ENCODE measurements at regions of chr3 and their contacts with region 1.

Region 1: DNA sequence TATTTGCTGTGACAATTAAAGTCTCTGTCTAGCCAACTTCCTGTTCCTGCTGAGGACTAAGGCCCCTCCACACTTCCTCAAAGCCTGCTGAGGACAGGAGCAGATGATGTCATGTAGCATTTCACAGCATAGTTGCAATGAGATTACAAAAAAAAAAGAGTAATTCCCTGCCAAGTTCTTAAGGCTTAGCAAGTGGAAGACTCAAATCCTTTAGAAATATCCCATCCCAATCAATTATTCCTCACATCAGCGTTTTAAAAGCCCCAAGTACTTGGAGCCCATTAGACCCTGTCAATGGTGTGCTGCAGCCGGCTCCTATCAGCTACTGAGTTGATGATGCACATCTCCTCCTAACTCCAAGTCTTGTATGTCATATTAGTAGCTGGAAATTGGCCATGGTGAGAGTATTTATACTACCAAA is 51.7 kb downstream of the TRANK1 start:
- DNase-seq: peak in 22 of 35 experiments; percentile 24 to 77 (median 39)
- ATAC-seq: peak; percentile 87 to 97 (median 90)
- H3K4me3 ChIP-seq: no peak overlapping the region
- H3K4me3 Mint-ChIP-seq: peak overlapping the region in 1 of 3 donors; percentile 26
- H3K27ac ChIP-seq: peak overlapping the region; percentile 59
- H3K27ac Mint-ChIP-seq: peak overlapping the region; percentile 92 to 93
- H3K4me1 ChIP-seq: peaks cover 17 to 32% of the 10 kb centered on the region in 2 experiments
- H3K4me1 Mint-ChIP-seq: peaks cover 64 to 72% (median 68%) of the 10 kb centered on the region in 3 donors
- H3K27me3 ChIP-seq: no peaks in the 10 kb centered on the region
- H3K27me3 Mint-ChIP-seq: no peaks in the 10 kb centered on the region

Region 2: DNA sequence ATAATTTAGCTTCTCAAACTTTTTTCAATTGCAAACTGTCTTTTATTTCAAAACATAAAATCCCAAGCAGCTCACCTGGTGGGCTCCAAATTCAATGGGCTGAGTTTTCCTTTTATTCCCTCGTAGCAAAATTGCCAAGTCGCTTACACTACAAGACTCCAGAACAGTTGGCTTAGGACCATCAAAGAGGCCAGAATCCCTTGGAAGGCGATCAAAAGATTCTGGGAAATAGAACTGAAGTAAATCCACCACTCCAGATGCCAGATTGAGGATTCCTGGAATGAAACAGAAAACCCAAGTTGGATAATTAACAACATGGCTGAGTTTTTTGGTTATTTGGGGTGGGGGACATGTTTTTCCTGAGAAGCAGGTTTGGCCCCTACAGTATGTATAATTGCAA is 41.1 kb before region 1 on chr3:
- CTCF ChIA-PET with region 1: no interaction called
- POLR2A ChIA-PET with region 1: no interaction called
- DNase-seq: no peak
- ATAC-seq: no peak
- H3K4me3 ChIP-seq: no peak overlapping the region
- H3K4me3 Mint-ChIP-seq: no peak overlapping the region
- H3K27ac ChIP-seq: no peak overlapping the region
- H3K27ac Mint-ChIP-seq: no peak overlapping the region
- H3K4me1 ChIP-seq: no peaks in the 10 kb centered on the region
- H3K4me1 Mint-ChIP-seq: peaks cover 3 to 17% (median 5%) of the 10 kb centered on the region in 3 donors
- H3K27me3 ChIP-seq: no peaks in the 10 kb centered on the region
- H3K27me3 Mint-ChIP-seq: no peaks in the 10 kb centered on the region

Region 3: GRCh38 chr3:36876181-36876936 is 16.8 kb before region 1 on chr3:
- CTCF ChIA-PET with region 1: interaction called in 1 of 2 experiments, 10 read pairs
- POLR2A ChIA-PET with region 1: interaction called, 4 to 6 read pairs
- DNase-seq: peak in 25 of 35 experiments; percentile 4 to 78 (median 17)
- ATAC-seq: peak; percentile 86 to 92 (median 91)
- H3K4me3 ChIP-seq: peak overlapping the region; percentile 18 to 23
- H3K4me3 Mint-ChIP-seq: peak overlapping the region; percentile 61 to 76 (median 66)
- H3K27ac ChIP-seq: peak overlapping the region; percentile 89
- H3K27ac Mint-ChIP-seq: peak overlapping the region; percentile 94 to 99
- H3K4me1 ChIP-seq: peaks cover 23 to 30% of the 10 kb centered on the region in 2 experiments
- H3K4me1 Mint-ChIP-seq: peaks cover 55 to 65% (median 57%) of the 10 kb centered on the region in 3 donors
- H3K27me3 ChIP-seq: no peaks in the 10 kb centered on the region
- H3K27me3 Mint-ChIP-seq: no peaks in the 10 kb centered on the region

Region 4: DNA sequence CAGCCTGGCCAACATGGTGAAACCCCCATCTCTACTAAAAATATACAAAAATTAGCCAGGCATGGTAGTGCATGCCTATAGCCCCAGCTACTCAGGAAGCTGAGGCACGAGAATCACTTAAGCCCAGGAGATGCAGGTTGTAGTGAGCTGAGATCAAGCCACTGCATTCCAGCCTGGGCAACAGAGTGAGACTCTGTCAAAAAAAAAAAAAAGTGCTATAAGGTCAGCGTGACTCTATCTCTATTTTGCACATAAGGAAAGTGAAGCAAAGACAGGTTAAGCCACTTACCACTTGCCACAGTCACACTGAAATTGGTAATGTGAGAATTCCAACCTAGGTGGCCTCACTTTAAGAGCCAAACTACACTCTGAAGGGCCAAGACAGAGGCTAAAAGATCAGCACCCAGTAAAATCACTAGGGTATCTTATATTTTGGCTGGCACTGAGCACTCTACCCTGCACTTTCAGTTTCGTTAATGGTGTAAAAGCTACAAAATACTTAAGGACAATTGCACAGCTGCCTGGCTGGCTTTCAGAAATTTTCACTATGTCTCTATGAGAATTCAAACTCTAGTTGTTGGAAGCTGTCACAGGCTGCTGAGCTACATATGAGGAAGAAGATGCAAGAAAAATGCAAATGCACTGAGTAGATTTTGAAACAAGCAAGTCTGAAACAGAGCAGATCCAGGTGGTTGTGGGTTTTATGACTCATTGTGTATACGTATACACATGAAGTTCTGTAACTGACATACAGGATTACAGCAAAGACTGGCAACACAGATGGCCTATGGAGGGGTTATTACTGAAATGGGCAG is 19.1 kb after region 1 on chr3:
- CTCF ChIA-PET with region 1: interaction called in 1 of 2 experiments, 6 read pairs
- POLR2A ChIA-PET with region 1: interaction called, 4 to 12 read pairs
- DNase-seq: peak in 20 of 35 experiments; percentile 2 to 72 (median 24)
- ATAC-seq: peak; percentile 83 to 86 (median 84)
- H3K4me3 ChIP-seq: peak overlapping the region; percentile 23 to 47
- H3K4me3 Mint-ChIP-seq: peak overlapping the region; percentile 55 to 72 (median 70)
- H3K27ac ChIP-seq: peak overlapping the region; percentile 88
- H3K27ac Mint-ChIP-seq: peak overlapping the region; percentile 83 to 88
- H3K4me1 ChIP-seq: peaks cover 19 to 29% of the 10 kb centered on the region in 2 experiments
- H3K4me1 Mint-ChIP-seq: peaks cover 41 to 56% (median 48%) of the 10 kb centered on the region in 3 donors
- H3K27me3 ChIP-seq: no peaks in the 10 kb centered on the region
- H3K27me3 Mint-ChIP-seq: no peaks in the 10 kb centered on the region

Measured in T-cell (primary cell).